Ascending aorta (tissue), 2 donors: ENCODE measurements at regions of chr5 and their contacts with region 1.

Region 1: GRCh38 chr5:6712577-6713275 is 506 bp upstream of the TENT4A start:
- DNase-seq: peak; percentile 88 to 98
- H3K4me3 ChIP-seq: peak overlapping the region; percentile 79 to 93
- H3K27ac ChIP-seq: peak overlapping the region; percentile 97 to 99
- H3K4me1 ChIP-seq: peaks cover 6 to 36% of the 10 kb centered on the region in 2 donors
- H3K27me3 ChIP-seq: no peaks in the 10 kb centered on the region
- CTCF ChIP-seq: no peak

Region 2: GRCh38 chr5:5492087-5492933 is 1220.4 kb before region 1 on chr5:
- intact Hi-C with region 1: loop called (anchors 10 kb)
- DNase-seq: no peak
- H3K4me3 ChIP-seq: no peak overlapping the region
- H3K27ac ChIP-seq: no peak overlapping the region
- H3K4me1 ChIP-seq: no peaks in the 10 kb centered on the region
- H3K27me3 ChIP-seq: no peaks in the 10 kb centered on the region
- CTCF ChIP-seq: peak in 2 of 3 experiments; percentile 65 to 82

Region 3: DNA sequence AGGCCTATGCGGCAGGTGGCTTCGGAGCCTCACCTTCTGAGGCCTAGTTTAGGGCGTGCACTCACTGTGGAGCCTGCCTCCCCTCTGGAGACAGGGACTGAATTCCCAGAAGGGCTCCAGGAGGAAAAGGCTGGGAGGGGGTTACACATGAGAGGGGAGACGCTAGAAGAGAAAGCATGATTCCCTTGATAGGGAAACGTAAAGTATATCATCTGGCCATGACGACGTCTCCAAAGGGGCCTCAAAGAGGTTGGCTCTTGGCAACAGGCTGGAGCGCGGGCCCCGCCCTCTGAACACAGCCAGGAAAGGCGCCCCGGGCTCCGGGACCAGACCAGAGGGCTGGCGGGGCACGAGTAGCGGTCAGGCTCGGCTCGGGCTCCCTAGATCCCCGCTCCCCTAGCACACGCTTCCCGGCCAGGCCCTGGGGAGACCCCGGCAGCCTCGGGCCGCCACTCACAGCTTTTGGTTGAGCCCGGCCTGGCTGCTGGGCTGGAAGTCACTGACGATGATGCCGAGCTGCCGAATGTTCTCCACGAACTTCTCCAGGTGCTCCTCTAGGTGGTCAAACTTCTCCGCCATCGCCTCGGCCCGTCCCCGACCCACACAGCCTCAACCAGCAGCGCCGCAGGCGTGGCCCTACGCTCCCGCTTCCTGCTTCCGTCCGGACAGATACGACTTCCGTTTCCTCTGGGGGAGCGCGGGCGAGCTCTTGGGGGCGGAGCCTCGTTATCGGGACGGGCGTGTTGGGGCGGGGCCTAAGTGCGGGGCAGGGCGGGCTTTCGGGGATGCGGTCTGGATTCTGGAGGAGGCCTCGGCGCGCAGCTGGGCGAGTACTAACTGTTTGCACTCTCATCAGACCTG is 334.6 kb before region 1 on chr5 and contains the start of gene MED10:
- intact Hi-C with region 1: loop called (anchors 5 kb)
- DNase-seq: peak; percentile 79 to 97
- H3K4me3 ChIP-seq: peak within 1 kb of the TSS; percentile 80 to 86
- H3K27ac ChIP-seq: peak within 1 kb of the TSS; percentile 84 to 95
- H3K4me1 ChIP-seq: peaks cover 4 to 12% of the 10 kb centered on the region in 2 donors
- H3K27me3 ChIP-seq: no peaks in the 10 kb centered on the region
- CTCF ChIP-seq: no peak
- total RNA-seq, gene MED10: 2.9 TPM

Region 4: GRCh38 chr5:6632917-6633468 is 79.7 kb before region 1 on chr5 and contains the starts of genes NSUN2 and SRD5A1:
- intact Hi-C with region 1: loop called (anchors 1 kb)
- DNase-seq: peak; percentile 56 to 95
- H3K4me3 ChIP-seq: peak within 1 kb of the TSS; percentile 74 to 87
- H3K27ac ChIP-seq: peak within 1 kb of the TSS; percentile 83 to 97
- H3K4me1 ChIP-seq: peaks cover 0 to 14% of the 10 kb centered on the region in 2 donors
- H3K27me3 ChIP-seq: no peaks in the 10 kb centered on the region
- CTCF ChIP-seq: no peak
- total RNA-seq, gene NSUN2: 19.1 TPM
- total RNA-seq, gene SRD5A1: 186 TPM

Region 5: GRCh38 chr5:6732634-6733410 is 20.1 kb after region 1 on chr5:
- intact Hi-C with region 1: loop called (anchors 1 kb)
- DNase-seq: peak in 1 of 2 donors; percentile 83
- H3K4me3 ChIP-seq: peak overlapping the region; percentile 20 to 44
- H3K27ac ChIP-seq: peak overlapping the region; percentile 81 to 91
- H3K4me1 ChIP-seq: peaks cover 23 to 46% of the 10 kb centered on the region in 2 donors
- H3K27me3 ChIP-seq: no peaks in the 10 kb centered on the region
- CTCF ChIP-seq: no peak

Region 6: DNA sequence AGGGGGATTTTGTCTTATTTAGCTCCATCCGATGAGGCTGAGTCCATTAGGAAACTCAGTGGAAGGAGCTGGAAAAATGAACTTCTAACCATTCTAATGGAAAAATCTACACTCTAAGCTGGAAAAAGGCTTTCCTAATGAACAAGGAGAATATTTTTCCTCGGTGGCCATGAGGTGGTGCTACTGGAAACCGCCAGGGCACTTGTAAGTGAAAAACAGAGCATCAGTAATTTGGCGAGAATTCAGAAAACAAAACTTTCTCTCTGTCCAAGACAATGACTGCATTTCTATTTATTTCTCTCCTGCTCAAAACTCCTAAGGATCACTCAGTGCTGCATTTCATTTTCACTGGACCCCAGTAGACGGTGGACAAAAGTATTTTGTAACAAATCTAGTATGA is 238.1 kb after region 1 on chr5:
- intact Hi-C with region 1: no loop called
- DNase-seq: no peak
- H3K4me3 ChIP-seq: no peak overlapping the region
- H3K27ac ChIP-seq: no peak overlapping the region
- H3K4me1 ChIP-seq: no peaks in the 10 kb centered on the region
- H3K27me3 ChIP-seq: no peaks in the 10 kb centered on the region
- CTCF ChIP-seq: no peak